Activated naive CD4-positive, alpha-beta T cell treated with anti-CD3 and anti-CD28 coated beads, Interleukin-2, amount 10 ng/mL, durations not matched to agents 7 days and 5 days (primary cell): ENCODE measurements at regions of chr16 and their contacts with region 1.

Region 1: DNA sequence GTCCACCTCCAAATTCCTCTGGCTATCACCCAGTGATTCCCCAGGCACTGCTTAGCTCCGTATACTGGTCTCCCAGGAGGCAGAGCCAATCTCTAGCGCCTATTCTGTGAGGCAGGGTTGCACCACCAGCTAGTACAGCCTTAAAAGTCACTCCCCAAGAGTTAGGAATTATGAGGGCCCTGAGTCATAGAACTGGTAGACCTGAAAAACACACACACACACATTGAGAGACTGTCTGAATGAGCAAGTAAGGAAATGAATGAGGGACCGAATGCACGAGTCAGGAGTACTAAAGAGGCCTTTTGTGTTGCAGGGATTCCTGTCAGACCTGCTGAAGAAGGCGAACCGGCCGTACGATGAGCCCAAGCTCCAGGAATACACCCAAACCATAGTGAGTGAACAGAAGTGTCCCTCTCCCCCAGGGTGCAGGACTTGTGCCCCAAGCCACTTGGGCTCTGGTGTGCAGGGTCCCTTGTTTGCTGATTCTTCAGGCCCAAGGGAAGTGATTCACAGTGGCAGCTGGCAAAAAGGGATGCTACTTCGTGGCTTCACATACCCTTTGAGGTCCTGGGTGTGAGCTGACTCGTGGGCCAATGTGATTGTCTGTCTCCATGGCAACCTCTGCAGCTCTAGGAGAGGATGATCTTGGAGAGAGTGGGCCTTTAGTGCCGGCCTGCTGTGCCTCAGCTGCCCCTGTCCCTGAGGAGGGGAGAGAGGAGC is 24.7 kb downstream of the CALB2 start:
- DNase-seq: no peak
- H3K4me3 Mint-ChIP-seq: no peak overlapping the region
- H3K27ac Mint-ChIP-seq: no peak overlapping the region
- H3K4me1 Mint-ChIP-seq: peaks cover 3% of the 10 kb centered on the region
- H3K27me3 Mint-ChIP-seq: peaks cover 20% of the 10 kb centered on the region

Region 2: DNA sequence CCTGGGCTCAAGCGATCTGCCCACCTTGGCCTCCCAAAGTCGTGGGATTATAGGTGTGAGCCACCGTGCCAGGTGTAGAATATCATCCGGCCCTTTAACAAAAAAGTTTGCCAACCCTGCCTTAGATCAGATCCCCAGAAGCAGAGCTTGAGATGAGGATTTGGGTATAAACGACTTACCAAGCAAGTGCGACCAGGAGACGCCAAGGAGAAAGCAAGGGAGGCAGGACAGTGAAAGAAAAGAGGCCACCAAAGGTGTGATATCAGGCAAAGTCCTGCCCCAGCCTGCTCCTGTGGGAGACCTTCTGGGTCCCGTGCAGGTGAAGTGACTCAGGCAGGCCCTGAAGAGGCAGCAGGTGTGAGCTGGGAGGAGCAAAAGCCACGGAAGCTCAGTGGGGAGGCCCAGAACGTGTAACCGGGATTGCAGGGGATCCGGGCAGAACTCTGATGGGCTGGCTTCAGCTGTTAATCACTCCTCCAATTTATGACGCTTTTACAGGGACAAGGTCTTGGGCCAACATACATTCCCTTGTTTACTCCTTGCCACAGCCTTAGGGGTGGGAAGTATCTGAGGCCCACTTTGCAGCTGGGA is 38.8 kb before region 1 on chr16:
- CTCF ChIA-PET with region 1: no interaction called
- DNase-seq: no peak
- H3K4me3 Mint-ChIP-seq: no peak overlapping the region
- H3K27ac Mint-ChIP-seq: no peak overlapping the region
- H3K4me1 Mint-ChIP-seq: no peaks in the 10 kb centered on the region
- H3K27me3 Mint-ChIP-seq: peaks cover 20% of the 10 kb centered on the region

Region 3: DNA sequence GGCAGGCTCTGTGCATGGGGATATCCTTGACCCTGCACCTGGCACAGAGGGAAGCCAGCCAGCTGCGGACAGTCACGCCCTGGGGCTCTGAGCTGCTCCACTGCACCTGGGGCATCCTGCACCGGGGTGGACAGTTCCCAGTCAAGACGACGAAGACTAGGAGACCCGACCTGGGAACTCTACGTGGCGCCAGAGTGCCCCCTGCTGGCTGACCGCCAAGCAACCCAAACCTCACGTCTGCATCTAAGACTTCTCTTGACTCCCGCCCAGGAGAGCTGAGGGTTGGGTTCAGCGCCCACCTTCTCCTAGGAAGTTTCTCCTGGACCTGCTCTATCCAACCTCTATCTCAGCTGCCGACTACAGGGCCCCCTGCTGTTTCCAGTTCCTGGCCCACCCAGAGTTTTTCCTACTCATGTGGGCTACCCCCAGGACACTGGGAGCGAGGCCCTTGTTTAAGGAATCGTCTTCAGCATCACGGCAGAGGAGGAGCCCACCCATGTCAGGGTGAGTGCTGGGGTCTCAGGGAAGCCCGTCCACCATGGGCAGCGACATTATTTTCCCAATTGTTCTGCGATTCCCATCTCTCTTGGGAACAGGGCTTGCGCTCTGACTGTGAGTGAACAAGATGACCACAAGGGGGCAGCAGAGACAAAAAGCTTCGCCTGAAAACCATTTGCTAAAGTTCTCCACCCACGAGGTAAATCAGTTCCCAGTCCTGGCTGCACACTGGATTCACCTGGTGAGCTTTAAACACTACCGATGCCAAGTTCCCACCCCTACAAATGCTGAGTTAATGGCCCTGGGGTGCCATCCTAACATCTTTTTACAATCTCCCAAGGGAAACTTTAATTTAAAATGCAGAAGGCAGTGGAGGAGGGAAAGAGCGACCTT is 29.3 kb after region 1 on chr16:
- CTCF ChIA-PET with region 1: interaction called, 15 read pairs
- DNase-seq: peak; percentile 73
- H3K4me3 Mint-ChIP-seq: no peak overlapping the region
- H3K27ac Mint-ChIP-seq: no peak overlapping the region
- H3K4me1 Mint-ChIP-seq: peaks cover 3% of the 10 kb centered on the region
- H3K27me3 Mint-ChIP-seq: peaks cover 43% of the 10 kb centered on the region